ENCODE measurements at regions of chr5 and their contacts with region 1.

Region 1: GRCh38 chr5:44178414-44178813 is 210.8 kb downstream of the FGF10 start:
- DNase-seq: no peak
- ATAC-seq: no peak
- H3K4me3 Mint-ChIP-seq: no peak overlapping the region
- H3K27ac Mint-ChIP-seq: no peak overlapping the region
- H3K4me1 Mint-ChIP-seq: no peaks in the 10 kb centered on the region
- H3K27me3 Mint-ChIP-seq: no peaks in the 10 kb centered on the region
- CTCF ChIP-seq: no peak

Region 2: GRCh38 chr5:44199408-44199807 is 21.0 kb after region 1 on chr5:
- CTCF ChIA-PET with region 1: no interaction called
- POLR2A ChIA-PET with region 1: interaction called, 13 read pairs
- intact Hi-C with region 1: no loop called
- DNase-seq: no peak
- ATAC-seq: no peak
- H3K4me3 Mint-ChIP-seq: no peak overlapping the region
- H3K27ac Mint-ChIP-seq: no peak overlapping the region
- H3K4me1 Mint-ChIP-seq: no peaks in the 10 kb centered on the region
- H3K27me3 Mint-ChIP-seq: no peaks in the 10 kb centered on the region
- CTCF ChIP-seq: no peak

Measured in activated B cell treated with CpG ODN at 0.5 μM for 24 hours (primary cell).